ENCODE measurements at regions of chr2 and their contacts with region 1.

Region 1: DNA sequence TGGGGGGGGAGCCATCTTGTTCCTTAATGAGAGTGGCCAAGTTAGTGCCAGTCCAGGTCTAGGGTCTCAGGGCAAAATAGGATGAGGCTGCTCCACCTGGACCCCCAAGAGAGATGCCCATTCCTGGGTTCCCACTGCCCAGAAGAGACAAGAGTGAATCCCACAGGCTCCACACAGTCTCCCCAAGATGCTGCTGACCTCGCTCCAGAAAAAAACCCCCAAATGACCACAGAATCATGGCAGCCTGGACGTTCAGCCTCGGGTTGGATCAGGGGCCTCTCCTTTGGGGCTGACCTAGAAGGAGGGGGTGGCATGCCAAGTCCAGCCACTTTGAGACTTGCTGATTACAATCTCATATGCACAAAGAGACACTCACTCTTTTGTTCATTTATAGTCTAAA is 25.1 kb downstream of the STAT1 start:
- DNase-seq: no peak
- CTCF ChIP-seq: no peak

Region 2: GRCh38 chr2:190974631-190975361 is 14.1 kb before region 1 on chr2:
- CTCF ChIA-PET with region 1: interaction called, 11 read pairs
- POLR2A ChIA-PET with region 1: no interaction called
- DNase-seq: no peak
- CTCF ChIP-seq: no peak